ENCODE measurements at regions of chr10 and their contacts with region 1.

Region 1: GRCh38 chr10:91163269-91163868 is 57.1 kb upstream of the PCGF5 start:
- DNase-seq: peak in 1 of 2 donors; percentile 81
- H3K4me3 ChIP-seq: peak overlapping the region; percentile 81 to 94
- H3K27ac ChIP-seq: peak overlapping the region; percentile 96 to 98
- H3K4me1 ChIP-seq: peaks cover 0 to 9% of the 10 kb centered on the region in 2 donors
- H3K27me3 ChIP-seq: no peaks in the 10 kb centered on the region
- CTCF ChIP-seq: peak in 1 of 3 experiments; percentile 19

Region 2: GRCh38 chr10:91043173-91043910 is 120.0 kb before region 1 on chr10:
- intact Hi-C with region 1: loop called (anchors 5 kb)
- DNase-seq: no peak
- H3K4me3 ChIP-seq: no peak overlapping the region
- H3K27ac ChIP-seq: no peak overlapping the region
- H3K4me1 ChIP-seq: peaks cover 0 to 5% of the 10 kb centered on the region in 2 donors
- H3K27me3 ChIP-seq: no peaks in the 10 kb centered on the region
- CTCF ChIP-seq: peak in 2 of 3 experiments; percentile 38 to 62

Region 3: DNA sequence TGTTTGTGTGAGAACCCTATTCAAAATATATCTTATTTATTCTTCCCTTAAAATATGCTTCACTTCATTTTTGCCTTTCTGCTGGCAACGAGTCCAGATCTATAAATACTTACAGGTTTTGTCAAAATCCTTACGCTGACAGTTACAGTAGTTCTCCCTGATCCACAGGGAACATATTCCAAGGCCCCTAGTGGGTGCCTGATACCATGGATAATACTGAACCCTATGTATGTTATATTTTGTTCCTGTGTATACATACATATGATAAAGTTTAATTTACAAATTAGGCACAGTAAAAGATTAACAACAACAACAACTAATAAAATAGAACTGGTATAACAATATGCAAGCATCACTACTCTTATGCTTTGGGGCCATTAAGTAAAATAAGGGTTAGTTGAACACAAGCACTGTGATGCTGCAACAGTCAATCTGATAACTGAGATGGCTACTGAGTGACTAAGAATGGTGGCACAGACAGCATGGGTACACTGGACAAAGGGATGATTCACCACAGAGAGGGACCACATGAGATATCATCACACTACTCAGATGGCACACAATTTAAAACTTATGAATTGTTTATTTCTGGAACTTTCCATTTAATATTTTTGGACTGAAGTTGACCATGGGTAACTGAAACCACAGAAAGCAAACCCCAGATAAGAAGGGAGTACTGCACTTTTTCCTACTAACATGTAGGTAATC is 27.7 kb after region 1 on chr10:
- intact Hi-C with region 1: loop called (anchors 1 kb)
- DNase-seq: no peak
- H3K4me3 ChIP-seq: no peak overlapping the region
- H3K27ac ChIP-seq: peak overlapping the region; percentile 59 to 91
- H3K4me1 ChIP-seq: peaks cover 3 to 48% of the 10 kb centered on the region in 2 donors
- H3K27me3 ChIP-seq: no peaks in the 10 kb centered on the region
- CTCF ChIP-seq: no peak

Region 4: GRCh38 chr10:91251430-91252056 is 88.2 kb after region 1 on chr10:
- intact Hi-C with region 1: loop called (anchors 5 kb)
- DNase-seq: peak in 1 of 2 donors; percentile 77
- H3K4me3 ChIP-seq: no peak overlapping the region
- H3K27ac ChIP-seq: no peak overlapping the region
- H3K4me1 ChIP-seq: peaks cover 5 to 17% of the 10 kb centered on the region in 2 donors
- H3K27me3 ChIP-seq: no peaks in the 10 kb centered on the region
- CTCF ChIP-seq: peak; percentile 78 to 91 (median 82)